Heart right ventricle (tissue), 16 donors: ENCODE measurements at regions of chr3 and their contacts with region 1.

Region 1: GRCh38 chr3:132530624-132531023 is 66.4 kb upstream of the ACKR4 start:
- DNase-seq: no peak
- ATAC-seq: no peak
- H3K4me3 ChIP-seq: no peak overlapping the region
- H3K27ac ChIP-seq: no peak overlapping the region
- H3K4me1 ChIP-seq: no peaks in the 10 kb centered on the region
- H3K27me3 ChIP-seq: no peaks in the 10 kb centered on the region
- CTCF ChIP-seq: no peak

Region 2: DNA sequence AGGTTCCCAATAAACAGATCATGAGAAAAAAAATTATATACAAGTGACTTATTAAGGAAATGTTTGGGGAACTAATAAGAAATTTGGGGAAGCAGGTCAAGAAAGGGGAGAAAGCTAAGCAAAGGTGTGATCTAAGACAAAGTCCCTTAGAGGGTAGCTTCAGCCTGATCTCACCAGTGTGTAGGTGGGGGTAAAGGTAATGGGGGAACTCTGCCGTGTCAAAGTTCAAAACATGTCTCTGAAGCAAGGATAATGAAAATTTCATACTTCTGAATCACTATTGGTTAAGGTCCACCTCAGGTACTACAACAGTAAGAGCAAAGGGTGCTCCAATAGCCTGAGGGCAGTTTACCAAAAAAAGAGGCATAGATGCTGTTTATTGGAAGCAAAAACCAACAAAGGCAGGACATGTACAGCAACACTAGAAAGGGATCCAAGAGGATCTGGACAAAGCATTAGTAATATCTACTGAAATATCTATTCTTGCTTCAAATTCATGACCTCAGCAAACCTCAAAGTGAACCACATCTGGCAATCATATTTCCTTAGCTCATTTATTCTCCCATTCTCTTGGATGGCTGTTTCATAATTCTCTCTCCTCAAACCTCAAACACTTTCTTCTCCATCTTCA is 122.1 kb after region 1 on chr3:
- intact Hi-C with region 1: loop called in 1 of 10 experiments (anchors 5 kb)
- DNase-seq: no peak
- ATAC-seq: peak in 4 of 8 donors; percentile 7 to 41 (median 28)
- H3K4me3 ChIP-seq: no peak overlapping the region
- H3K27ac ChIP-seq: peak overlapping the region in 1 of 10 donors; percentile 37
- H3K4me1 ChIP-seq: peaks cover 0 to 67% (median 43%) of the 10 kb centered on the region in 9 donors
- H3K27me3 ChIP-seq: no peaks in the 10 kb centered on the region
- CTCF ChIP-seq: no peak